ENCODE measurements at regions of chr12 and their contacts with region 1.

Region 1: GRCh38 chr12:26126340-26127284 is 1.8 kb upstream of the BHLHE41 start:
- DNase-seq: peak; percentile 89
- H3K4me3 ChIP-seq: peak overlapping the region; percentile 63 to 90 (median 88)
- H3K27ac ChIP-seq: peak overlapping the region; percentile 94
- H3K4me1 ChIP-seq: peaks cover 25% of the 10 kb centered on the region
- H3K27me3 ChIP-seq: no peaks in the 10 kb centered on the region
- CTCF ChIP-seq: peak in 1 of 2 donors; percentile 24

Region 2: DNA sequence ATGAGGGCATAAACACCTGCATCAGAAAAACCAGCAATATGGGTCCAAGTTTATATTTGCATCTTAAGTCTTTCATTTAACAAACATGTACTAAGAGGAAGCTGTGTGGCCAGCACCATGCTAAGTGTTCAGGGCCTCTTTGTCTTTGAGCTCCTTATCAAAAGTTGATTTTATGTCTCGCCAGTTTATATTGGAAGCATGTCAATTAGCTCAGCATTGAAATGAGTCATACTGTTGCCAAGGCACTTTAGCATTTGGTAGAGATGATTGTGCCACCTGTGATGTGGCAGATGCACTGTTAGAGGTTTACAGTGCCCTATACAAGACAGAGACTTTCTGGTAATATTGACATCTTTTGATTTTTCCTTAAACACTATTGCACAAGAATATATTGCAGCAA is 70.3 kb before region 1 on chr12:
- CTCF ChIA-PET with region 1: no interaction called
- dilution Hi-C with region 1: no loop called
- in situ Hi-C with region 1: no loop called
- intact Hi-C with region 1: no loop called
- DNase-seq: peak; percentile 78
- H3K4me3 ChIP-seq: no peak overlapping the region
- H3K27ac ChIP-seq: no peak overlapping the region
- H3K4me1 ChIP-seq: peaks cover 7% of the 10 kb centered on the region
- H3K27me3 ChIP-seq: no peaks in the 10 kb centered on the region
- CTCF ChIP-seq: no peak

Region 3: GRCh38 chr12:26097046-26097878 is 29.4 kb before region 1 on chr12:
- CTCF ChIA-PET with region 1: interaction called, 5 read pairs
- dilution Hi-C with region 1: no loop called
- in situ Hi-C with region 1: no loop called
- intact Hi-C with region 1: loop called (anchors 1 kb)
- DNase-seq: peak; percentile 72
- H3K4me3 ChIP-seq: no peak overlapping the region
- H3K27ac ChIP-seq: peak overlapping the region; percentile 44
- H3K4me1 ChIP-seq: peaks cover 14% of the 10 kb centered on the region
- H3K27me3 ChIP-seq: no peaks in the 10 kb centered on the region
- CTCF ChIP-seq: peak; percentile 95 to 96

Region 4: DNA sequence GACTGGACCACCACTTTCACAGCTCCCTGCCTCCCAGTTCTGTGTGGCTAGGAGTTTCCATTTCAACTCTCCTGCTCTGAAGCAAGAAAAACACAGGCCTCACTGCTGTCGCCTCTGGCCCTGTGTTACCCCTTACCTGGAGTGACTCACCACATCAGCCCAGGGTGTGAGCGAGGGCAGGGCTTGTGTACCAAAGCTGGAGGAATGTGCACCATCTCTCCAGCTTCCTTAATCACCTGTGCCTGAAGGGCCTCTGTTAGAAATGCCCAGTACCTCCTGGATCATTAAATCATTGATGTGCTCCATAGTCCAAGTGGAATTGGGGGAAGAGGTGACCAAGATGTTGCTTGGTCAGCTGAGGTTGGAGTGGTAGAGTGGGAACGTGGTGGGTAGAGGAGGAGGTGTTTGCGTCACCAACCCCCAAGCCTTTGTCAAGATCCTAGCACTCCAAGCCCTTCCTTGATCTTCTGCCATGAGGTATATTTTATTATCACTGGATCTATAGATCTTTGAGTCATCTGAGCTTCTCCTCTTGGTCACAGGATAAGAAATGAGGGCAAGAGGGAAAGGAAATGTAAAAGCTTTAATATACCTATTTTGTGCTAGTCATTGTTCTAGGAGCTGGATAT is 120.0 kb after region 1 on chr12:
- CTCF ChIA-PET with region 1: no interaction called
- dilution Hi-C with region 1: loop called (anchors 10 kb)
- in situ Hi-C with region 1: no loop called
- intact Hi-C with region 1: loop called (anchors 5 kb)
- DNase-seq: peak; percentile 93
- H3K4me3 ChIP-seq: no peak overlapping the region
- H3K27ac ChIP-seq: peak overlapping the region; percentile 72
- H3K4me1 ChIP-seq: peaks cover 26% of the 10 kb centered on the region
- H3K27me3 ChIP-seq: no peaks in the 10 kb centered on the region
- CTCF ChIP-seq: no peak

Region 5: DNA sequence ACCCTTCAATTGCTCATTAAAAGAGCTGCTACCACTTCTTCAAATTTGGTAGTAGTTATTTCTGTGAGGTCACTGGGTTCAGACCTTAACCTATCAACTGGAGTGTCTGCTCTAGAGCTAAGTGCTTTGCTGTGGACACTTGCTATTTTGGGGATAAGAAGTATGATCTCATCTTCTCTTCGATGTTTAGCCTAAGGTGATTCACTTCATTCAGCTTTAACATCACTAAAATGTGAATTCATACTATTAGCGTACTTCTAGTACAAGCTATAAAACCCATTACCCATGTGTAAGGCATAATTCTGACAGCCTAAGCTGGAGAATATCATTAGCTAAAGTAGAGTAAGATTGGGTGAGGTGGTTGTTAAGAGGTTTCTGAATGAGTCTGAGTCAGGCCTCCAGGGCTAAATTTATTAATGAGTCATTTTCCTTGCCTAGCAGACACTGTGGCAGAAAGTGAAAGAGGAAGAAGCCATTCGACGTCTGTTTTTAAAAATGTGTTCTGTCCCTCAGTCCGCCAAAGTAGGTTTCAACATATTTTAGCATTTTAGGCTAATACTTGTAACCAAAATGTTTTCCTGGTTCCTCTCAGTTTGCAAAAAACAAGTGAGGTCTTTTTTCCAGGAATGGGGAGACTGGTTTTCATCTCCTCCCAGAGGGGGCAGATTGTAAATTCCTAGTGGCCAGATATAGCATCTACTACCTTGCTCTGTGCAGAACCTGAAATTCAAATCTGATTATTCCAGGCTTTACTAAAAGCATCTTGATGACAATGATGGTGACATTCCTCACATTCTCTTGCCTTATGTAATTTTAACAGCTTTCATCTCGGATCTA is 172.4 kb after region 1 on chr12:
- CTCF ChIA-PET with region 1: interaction called, 3 read pairs
- dilution Hi-C with region 1: no loop called
- in situ Hi-C with region 1: loop called in 1 of 2 experiments (anchors 10 kb)
- intact Hi-C with region 1: loop called (anchors 2 kb)
- DNase-seq: peak; percentile 94
- H3K4me3 ChIP-seq: peak overlapping the region; percentile 13 to 35 (median 26)
- H3K27ac ChIP-seq: peak overlapping the region; percentile 92
- H3K4me1 ChIP-seq: peaks cover 30% of the 10 kb centered on the region
- H3K27me3 ChIP-seq: no peaks in the 10 kb centered on the region
- CTCF ChIP-seq: peak; percentile 47 to 52

Region 6: DNA sequence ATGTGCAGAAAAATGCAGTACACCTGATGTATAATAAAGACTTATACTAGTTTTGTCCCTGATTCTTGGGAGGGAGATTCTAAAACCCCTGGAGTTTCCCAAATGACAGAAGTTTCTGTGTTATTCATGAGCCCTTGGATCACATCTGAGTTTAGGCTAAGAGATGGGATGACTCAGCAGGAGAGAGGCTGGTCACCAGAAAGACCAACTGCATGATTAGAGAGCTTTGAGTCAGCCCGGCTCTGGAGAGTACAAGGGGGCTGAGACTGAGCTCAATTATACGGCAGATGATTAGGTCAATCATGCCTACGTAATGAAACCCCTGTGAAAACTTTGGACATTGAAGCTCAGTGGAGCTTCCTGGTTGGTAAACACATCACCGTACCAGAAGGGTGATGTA is 243.0 kb after region 1 on chr12:
- CTCF ChIA-PET with region 1: no interaction called
- dilution Hi-C with region 1: no loop called
- in situ Hi-C with region 1: no loop called
- intact Hi-C with region 1: no loop called
- DNase-seq: peak; percentile 99
- H3K4me3 ChIP-seq: no peak overlapping the region
- H3K27ac ChIP-seq: peak overlapping the region; percentile 33
- H3K4me1 ChIP-seq: peaks cover 19% of the 10 kb centered on the region
- H3K27me3 ChIP-seq: no peaks in the 10 kb centered on the region
- CTCF ChIP-seq: no peak

Region 7: GRCh38 chr12:26434299-26435068 is 307.9 kb after region 1 on chr12:
- CTCF ChIA-PET with region 1: no interaction called
- dilution Hi-C with region 1: no loop called
- in situ Hi-C with region 1: no loop called
- intact Hi-C with region 1: loop called (anchors 1 kb)
- DNase-seq: peak; percentile 60
- H3K4me3 ChIP-seq: no peak overlapping the region
- H3K27ac ChIP-seq: no peak overlapping the region
- H3K4me1 ChIP-seq: no peaks in the 10 kb centered on the region
- H3K27me3 ChIP-seq: no peaks in the 10 kb centered on the region
- CTCF ChIP-seq: peak; percentile 89 to 98

Region 8: DNA sequence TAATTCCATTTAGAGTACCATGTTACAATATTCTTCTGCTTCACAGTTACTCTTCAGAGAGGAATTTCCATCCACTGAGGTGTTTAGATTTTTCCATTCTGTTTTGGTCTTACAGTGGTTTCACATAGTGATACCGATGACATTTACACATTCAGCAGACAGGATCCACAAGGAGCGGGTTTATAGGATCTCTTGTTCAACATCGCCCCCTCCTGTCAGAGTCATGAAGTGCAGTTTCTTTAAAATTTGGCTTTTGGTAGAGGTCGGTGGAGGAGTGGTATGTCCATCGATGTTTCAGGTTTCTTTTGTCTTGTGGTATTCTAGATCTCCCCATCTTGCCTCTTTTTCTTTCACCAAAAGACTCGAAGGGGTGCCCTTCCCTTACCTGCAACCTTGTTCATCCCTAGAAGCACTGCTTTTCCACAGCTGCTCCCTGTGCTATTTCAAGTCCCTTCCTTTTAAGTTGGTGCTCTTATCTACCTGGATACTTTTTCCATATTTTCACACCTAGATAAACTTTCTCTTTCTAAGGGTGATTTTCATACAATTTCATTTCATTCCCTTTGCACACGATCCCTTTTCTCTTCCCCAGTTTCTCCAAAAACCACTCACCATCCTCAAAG is 525.1 kb after region 1 on chr12:
- CTCF ChIA-PET with region 1: no interaction called
- dilution Hi-C with region 1: no loop called
- in situ Hi-C with region 1: loop called in 1 of 2 experiments (anchors 25 kb)
- intact Hi-C with region 1: loop called (anchors 1 kb)
- DNase-seq: peak; percentile 67
- H3K4me3 ChIP-seq: no peak overlapping the region
- H3K27ac ChIP-seq: no peak overlapping the region
- H3K4me1 ChIP-seq: peaks cover 14% of the 10 kb centered on the region
- H3K27me3 ChIP-seq: no peaks in the 10 kb centered on the region
- CTCF ChIP-seq: peak; percentile 72 to 84

Measured in mammary epithelial cell (primary cell).